Endothelial cell of umbilical vein (primary cell): ENCODE measurements at regions of chr10 and their contacts with region 1.

Region 1: DNA sequence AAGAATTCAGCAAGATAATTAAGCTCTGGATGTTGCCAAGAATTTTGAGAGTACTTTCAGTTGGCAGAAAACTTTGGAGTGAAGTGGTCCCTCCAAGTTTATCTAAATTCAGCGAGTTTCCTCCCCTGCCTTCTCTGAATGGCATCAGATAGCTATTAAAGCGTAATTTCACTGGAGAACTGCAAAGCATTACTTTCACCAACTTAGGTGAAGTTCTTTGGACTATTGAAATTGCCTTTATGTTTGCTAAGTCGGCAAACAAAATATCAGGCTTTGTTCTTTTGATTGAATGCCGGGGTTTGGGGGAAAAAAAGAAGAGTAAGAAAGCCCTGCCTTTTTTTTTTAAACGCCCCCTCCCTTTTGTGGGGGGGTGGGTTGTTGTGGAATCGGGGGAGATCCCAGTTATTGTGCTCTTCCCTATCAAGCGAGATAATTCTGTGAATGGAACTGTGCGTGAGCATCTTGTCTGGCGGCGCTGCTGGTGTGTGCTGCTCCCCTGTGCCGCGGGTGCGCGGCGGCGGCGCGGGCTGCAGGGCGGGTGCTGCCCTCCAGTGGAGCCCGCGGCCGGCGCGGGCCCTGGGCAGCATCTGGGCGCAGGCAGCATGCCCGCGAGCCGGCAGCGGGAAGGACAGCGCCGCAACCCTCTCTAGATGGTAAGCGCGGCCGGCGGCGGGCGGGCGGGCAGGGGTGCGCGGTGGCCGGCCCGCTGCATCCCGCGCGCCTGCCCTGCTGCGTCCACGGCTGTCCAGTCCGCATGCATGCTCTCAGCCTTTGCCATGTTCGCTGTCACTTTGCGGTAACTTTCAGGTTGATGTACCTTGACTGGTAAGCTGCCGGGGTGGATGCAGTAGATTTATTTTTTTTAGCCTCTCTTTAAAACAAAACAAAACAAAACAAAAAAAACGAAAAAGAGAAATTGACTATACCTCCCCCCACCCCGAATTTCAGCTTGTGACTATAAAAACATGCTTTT is 176.5 kb downstream of the TCF7L2 start:
- DNase-seq: peak; percentile 76
- H3K4me3 ChIP-seq: peak overlapping the region in 1 of 3 experiments; percentile 44
- H3K27ac ChIP-seq: no peak overlapping the region
- H3K4me1 ChIP-seq: peaks cover 4% of the 10 kb centered on the region
- H3K27me3 ChIP-seq: no peaks in the 10 kb centered on the region
- CTCF ChIP-seq: peak; percentile 56 to 77
- POLR2A ChIP-seq: no peak

Region 2: GRCh38 chr10:112565434-112566053 is 561.0 kb before region 1 on chr10:
- CTCF ChIA-PET with region 1: interaction called, 3 read pairs
- POLR2A ChIA-PET with region 1: no interaction called
- dilution Hi-C with region 1: loop called (anchors 25 kb)
- intact Hi-C with region 1: loop called (anchors 1 kb)
- DNase-seq: peak; percentile 87
- H3K4me3 ChIP-seq: no peak overlapping the region
- H3K27ac ChIP-seq: no peak overlapping the region
- H3K4me1 ChIP-seq: no peaks in the 10 kb centered on the region
- H3K27me3 ChIP-seq: no peaks in the 10 kb centered on the region
- CTCF ChIP-seq: peak; percentile 53
- POLR2A ChIP-seq: no peak

Region 3: GRCh38 chr10:112721080-112721698 is 405.3 kb before region 1 on chr10:
- CTCF ChIA-PET with region 1: interaction called, 7 read pairs
- POLR2A ChIA-PET with region 1: no interaction called
- dilution Hi-C with region 1: no loop called
- intact Hi-C with region 1: loop called (anchors 1 kb)
- DNase-seq: peak; percentile 54
- H3K4me3 ChIP-seq: no peak overlapping the region
- H3K27ac ChIP-seq: no peak overlapping the region
- H3K4me1 ChIP-seq: no peaks in the 10 kb centered on the region
- H3K27me3 ChIP-seq: no peaks in the 10 kb centered on the region
- CTCF ChIP-seq: peak; percentile 56 to 57
- POLR2A ChIP-seq: no peak

Region 4: GRCh38 chr10:113080925-113081229 is 45.6 kb before region 1 on chr10:
- CTCF ChIA-PET with region 1: interaction called, 12 read pairs
- POLR2A ChIA-PET with region 1: no interaction called
- dilution Hi-C with region 1: no loop called
- intact Hi-C with region 1: no loop called
- DNase-seq: no peak
- H3K4me3 ChIP-seq: no peak overlapping the region
- H3K27ac ChIP-seq: no peak overlapping the region
- H3K4me1 ChIP-seq: peaks cover 5% of the 10 kb centered on the region
- H3K27me3 ChIP-seq: no peaks in the 10 kb centered on the region
- CTCF ChIP-seq: no peak
- POLR2A ChIP-seq: no peak